ENCODE measurements at regions of chr16 and their contacts with region 1.

Region 1: DNA sequence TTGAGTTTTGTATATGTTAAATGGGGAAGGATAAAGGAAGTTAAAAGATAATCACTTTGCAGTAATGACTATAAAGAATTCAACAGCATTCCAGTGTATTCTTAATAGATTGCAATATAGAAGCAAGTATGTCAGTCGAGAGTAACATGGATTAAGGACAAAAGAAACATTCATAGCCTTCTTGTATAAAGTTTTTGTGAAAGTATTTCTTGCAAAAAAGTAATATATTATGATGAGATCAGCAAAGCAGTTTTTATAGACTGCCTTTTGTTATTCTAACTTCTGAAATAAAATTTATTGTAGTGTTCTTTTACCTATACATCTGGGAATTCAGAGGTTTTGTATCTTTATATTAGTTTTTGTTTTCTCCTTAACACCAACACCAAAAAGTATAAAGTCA is 184.9 kb upstream of the RBL2 start:
- H3K4me3 Mint-ChIP-seq: no peak overlapping the region
- H3K27ac Mint-ChIP-seq: no peak overlapping the region
- H3K4me1 Mint-ChIP-seq: no peaks in the 10 kb centered on the region
- H3K27me3 Mint-ChIP-seq: no peaks in the 10 kb centered on the region

Region 2: DNA sequence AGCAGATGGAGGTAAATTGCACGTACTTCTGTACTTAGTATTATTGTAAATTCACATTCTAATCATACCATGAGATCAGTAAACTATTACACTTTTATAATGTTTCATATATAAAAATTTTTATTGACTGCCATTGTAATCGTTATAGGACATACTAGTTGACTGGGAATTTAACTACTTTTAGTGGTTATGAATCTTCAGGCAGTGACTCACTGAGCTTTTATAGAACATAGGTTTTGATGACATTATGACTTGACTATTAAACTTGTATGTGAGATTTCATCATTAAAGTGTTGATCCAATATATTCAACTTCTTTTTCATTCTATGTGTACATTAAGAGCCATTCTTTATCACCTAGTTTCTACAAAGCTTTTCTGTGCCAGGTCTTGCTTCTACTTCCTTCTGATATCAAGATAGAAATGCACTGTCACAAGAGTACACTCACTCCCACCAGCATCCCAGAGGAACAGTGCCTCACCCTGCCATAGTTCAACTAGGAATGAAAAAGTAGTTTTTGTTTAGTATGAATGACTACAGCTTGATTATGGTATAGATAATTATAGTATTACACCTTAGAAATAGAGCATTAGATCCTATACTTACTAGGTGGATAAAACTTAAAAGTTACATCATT is 42.5 kb after region 1 on chr16:
- intact Hi-C with region 1: loop called (anchors 10 kb)
- H3K4me3 Mint-ChIP-seq: no peak overlapping the region
- H3K27ac Mint-ChIP-seq: no peak overlapping the region
- H3K4me1 Mint-ChIP-seq: no peaks in the 10 kb centered on the region
- H3K27me3 Mint-ChIP-seq: no peaks in the 10 kb centered on the region

Region 3: DNA sequence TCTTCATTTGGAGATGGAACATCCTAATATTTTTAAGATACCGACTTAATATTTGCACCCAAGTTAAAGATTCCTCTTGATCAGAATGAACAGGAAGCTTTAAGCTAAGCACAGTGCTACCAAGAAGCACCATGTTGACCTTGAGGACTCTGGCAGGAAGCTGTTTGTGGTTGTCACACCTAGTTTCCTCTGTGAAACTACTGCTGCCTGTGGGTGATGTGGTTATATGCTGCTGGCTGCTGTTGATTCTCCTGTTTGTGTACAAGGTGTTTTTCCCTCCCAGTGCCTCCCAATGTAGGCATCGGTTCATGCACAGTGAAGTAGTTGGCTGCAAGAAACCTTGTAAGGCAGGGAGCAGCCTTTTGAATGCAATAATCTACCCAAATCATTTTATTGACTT is 208.3 kb after region 1 on chr16:
- intact Hi-C with region 1: loop called (anchors 10 kb)
- H3K4me3 Mint-ChIP-seq: no peak overlapping the region
- H3K27ac Mint-ChIP-seq: no peak overlapping the region
- H3K4me1 Mint-ChIP-seq: no peaks in the 10 kb centered on the region
- H3K27me3 Mint-ChIP-seq: no peaks in the 10 kb centered on the region

Measured in dendritic cell treated with granulocyte-macrophage colony-stimulating factor and Interleukin-4, amounts not matched to agents 40 ng/mL and 50 ng/mL, for 4 days (primary cell).